Activated CD4-positive, alpha-beta memory T cell treated with anti-CD3 and anti-CD28 coated beads for 36 hours (primary cell): ENCODE measurements at regions of chr2 and their contacts with region 1.

Region 1: DNA sequence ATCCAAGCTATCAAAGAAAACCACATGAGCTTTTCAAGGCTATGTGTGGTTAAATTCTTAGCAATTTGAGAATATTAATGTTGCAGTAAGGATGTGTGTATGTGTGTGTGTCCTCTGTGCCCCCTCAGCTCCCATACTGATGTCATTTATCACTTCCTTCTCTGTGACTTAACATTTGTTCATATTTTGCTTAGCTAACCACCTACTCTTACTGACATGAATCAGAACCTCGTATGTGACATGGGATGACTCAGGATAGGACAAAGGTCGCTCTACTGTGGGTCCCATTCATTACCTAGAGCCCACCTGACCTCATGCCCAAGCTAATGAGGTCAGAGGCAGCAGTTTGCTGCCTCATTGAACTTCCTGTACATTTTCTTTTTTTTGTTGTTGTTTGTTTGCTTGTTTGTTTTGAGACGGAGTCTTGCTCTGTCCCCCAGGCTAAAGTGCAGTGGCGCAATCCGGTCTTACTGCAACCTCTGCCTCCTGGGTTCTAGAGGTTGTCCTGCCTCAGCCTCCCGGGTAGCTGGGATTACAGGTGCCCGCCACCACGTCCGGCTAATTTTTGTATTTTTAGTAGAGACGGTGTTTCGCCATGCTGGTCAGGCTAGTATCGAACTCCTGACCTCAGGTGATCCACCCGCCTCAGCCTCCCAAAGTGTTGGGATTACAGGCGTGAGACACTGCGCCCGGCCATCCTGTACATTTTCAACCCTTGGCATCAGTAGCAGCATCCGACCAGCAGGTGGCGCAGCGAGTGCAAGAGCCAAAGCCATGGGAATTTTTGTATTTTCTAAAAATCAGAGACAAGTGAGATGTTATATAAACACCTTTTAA is 36.4 kb downstream of the MOGAT1 start:
- DNase-seq: peak; percentile 84
- H3K4me3 Mint-ChIP-seq: no peak overlapping the region
- H3K27ac Mint-ChIP-seq: no peak overlapping the region
- H3K4me1 Mint-ChIP-seq: peaks cover 6% of the 10 kb centered on the region
- H3K27me3 Mint-ChIP-seq: peaks cover 29% of the 10 kb centered on the region

Region 2: GRCh38 chr2:222690564-222691200 is 17.2 kb before region 1 on chr2:
- CTCF ChIA-PET with region 1: interaction called, 44 read pairs
- POLR2A ChIA-PET with region 1: no interaction called
- intact Hi-C with region 1: no loop called
- DNase-seq: peak; percentile 82
- H3K4me3 Mint-ChIP-seq: no peak overlapping the region
- H3K27ac Mint-ChIP-seq: no peak overlapping the region
- H3K4me1 Mint-ChIP-seq: peaks cover 14% of the 10 kb centered on the region
- H3K27me3 Mint-ChIP-seq: no peaks in the 10 kb centered on the region

Region 3: DNA sequence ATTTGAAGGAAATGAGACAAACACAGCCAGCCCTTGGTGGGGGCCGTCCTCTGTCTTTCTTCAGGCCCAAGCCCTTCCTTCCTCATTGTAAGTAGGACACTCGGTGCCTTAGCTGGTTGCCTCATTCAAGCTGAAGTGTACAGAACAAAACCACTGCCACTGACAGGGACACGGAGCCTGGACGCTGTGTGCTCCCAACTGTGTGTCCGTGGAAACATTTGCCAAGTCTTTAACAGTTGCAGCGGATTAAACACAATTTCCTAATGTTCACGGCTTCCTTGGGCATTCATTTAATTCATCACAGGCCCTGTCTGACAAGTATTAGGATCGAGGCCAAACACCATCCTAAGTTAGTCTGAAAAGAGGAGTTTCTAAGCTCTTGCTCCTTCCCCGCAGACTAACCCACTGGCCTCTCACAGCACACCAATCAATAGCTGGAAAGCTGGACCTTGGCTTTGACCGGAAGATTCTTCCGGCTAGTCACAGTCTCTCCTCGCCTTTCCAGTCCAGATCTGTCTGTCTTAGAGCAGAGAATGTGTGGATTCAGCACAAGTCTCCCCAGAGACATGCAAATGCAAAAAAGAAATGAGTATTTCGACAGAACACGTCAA is 84.2 kb after region 1 on chr2:
- CTCF ChIA-PET with region 1: interaction called, 3 read pairs
- POLR2A ChIA-PET with region 1: no interaction called
- intact Hi-C with region 1: loop called (anchors 1 kb)
- DNase-seq: no peak
- H3K4me3 Mint-ChIP-seq: no peak overlapping the region
- H3K27ac Mint-ChIP-seq: no peak overlapping the region
- H3K4me1 Mint-ChIP-seq: peaks cover 12% of the 10 kb centered on the region
- H3K27me3 Mint-ChIP-seq: no peaks in the 10 kb centered on the region

Region 4: GRCh38 chr2:222860740-222861410 is 153.0 kb after region 1 on chr2 and contains the start of gene ACSL3:
- CTCF ChIA-PET with region 1: interaction called, 11 read pairs
- POLR2A ChIA-PET with region 1: no interaction called
- intact Hi-C with region 1: loop called (anchors 1 kb)
- DNase-seq: peak; percentile 95
- H3K4me3 Mint-ChIP-seq: peak within 1 kb of the TSS; percentile 71
- H3K27ac Mint-ChIP-seq: peak within 1 kb of the TSS; percentile 84
- H3K4me1 Mint-ChIP-seq: peaks cover 3% of the 10 kb centered on the region
- H3K27me3 Mint-ChIP-seq: peaks cover 5% of the 10 kb centered on the region
- total RNA-seq, gene ACSL3: 48.7 to 57.2 TPM

Region 5: GRCh38 chr2:222903234-222904220 is 195.6 kb after region 1 on chr2:
- CTCF ChIA-PET with region 1: interaction called, 115 read pairs
- POLR2A ChIA-PET with region 1: no interaction called
- intact Hi-C with region 1: loop called (anchors 1 kb)
- DNase-seq: peak; percentile 34
- H3K4me3 Mint-ChIP-seq: no peak overlapping the region
- H3K27ac Mint-ChIP-seq: no peak overlapping the region
- H3K4me1 Mint-ChIP-seq: peaks cover 13% of the 10 kb centered on the region
- H3K27me3 Mint-ChIP-seq: no peaks in the 10 kb centered on the region

Region 6: GRCh38 chr2:222939208-222939856 is 231.4 kb after region 1 on chr2:
- CTCF ChIA-PET with region 1: interaction called, 67 read pairs
- POLR2A ChIA-PET with region 1: no interaction called
- intact Hi-C with region 1: loop called (anchors 1 kb)
- DNase-seq: peak; percentile 74
- H3K4me3 Mint-ChIP-seq: no peak overlapping the region
- H3K27ac Mint-ChIP-seq: no peak overlapping the region
- H3K4me1 Mint-ChIP-seq: peaks cover 11% of the 10 kb centered on the region
- H3K27me3 Mint-ChIP-seq: no peaks in the 10 kb centered on the region

Region 7: GRCh38 chr2:223285370-223286265 is 577.7 kb after region 1 on chr2:
- CTCF ChIA-PET with region 1: no interaction called
- POLR2A ChIA-PET with region 1: no interaction called
- intact Hi-C with region 1: no loop called
- DNase-seq: no peak
- H3K4me3 Mint-ChIP-seq: no peak overlapping the region
- H3K27ac Mint-ChIP-seq: no peak overlapping the region
- H3K4me1 Mint-ChIP-seq: no peaks in the 10 kb centered on the region
- H3K27me3 Mint-ChIP-seq: no peaks in the 10 kb centered on the region